IMR-90 (cell line): ENCODE measurements at regions of chr14 and their contacts with region 1.

Region 1: GRCh38 chr14:48504921-48505320 is 829.5 kb upstream of the MDGA2 start:
- DNase-seq: no peak
- ATAC-seq: no peak
- H3K4me3 ChIP-seq: no peak overlapping the region
- H3K27ac ChIP-seq: no peak overlapping the region
- H3K4me1 ChIP-seq: no peaks in the 10 kb centered on the region
- H3K27me3 ChIP-seq: no peaks in the 10 kb centered on the region
- CTCF ChIP-seq: no peak
- POLR2A ChIP-seq: no peak
- RAD21 ChIP-seq: no peak

Region 2: DNA sequence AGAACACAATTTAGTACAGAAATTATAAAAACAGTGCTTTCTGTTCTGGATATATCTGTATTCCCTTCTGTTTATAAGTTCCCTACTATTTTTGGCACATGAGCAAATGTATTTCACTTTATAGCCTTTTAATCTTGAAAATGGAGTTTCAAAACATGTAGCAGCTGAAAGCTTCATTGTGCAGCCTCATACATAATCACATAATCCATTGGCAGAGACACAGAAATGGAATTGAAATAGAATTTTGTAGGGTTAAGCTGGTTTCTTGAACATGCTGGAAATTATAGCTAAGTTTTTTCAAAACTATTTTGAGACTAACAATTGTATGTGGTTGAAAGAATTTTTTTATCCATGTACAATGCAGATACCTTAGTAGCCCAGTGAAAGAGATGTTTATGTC is 215.2 kb before region 1 on chr14:
- CTCF ChIA-PET with region 1: no interaction called
- POLR2A ChIA-PET with region 1: no interaction called
- dilution Hi-C with region 1: no loop called
- in situ Hi-C with region 1: no loop called
- intact Hi-C with region 1: no loop called
- DNase-seq: no peak
- ATAC-seq: no peak
- H3K4me3 ChIP-seq: no peak overlapping the region
- H3K27ac ChIP-seq: no peak overlapping the region
- H3K4me1 ChIP-seq: no peaks in the 10 kb centered on the region
- H3K27me3 ChIP-seq: no peaks in the 10 kb centered on the region
- CTCF ChIP-seq: no peak
- POLR2A ChIP-seq: no peak
- RAD21 ChIP-seq: no peak

Region 3: GRCh38 chr14:48456051-48456450 is 48.9 kb before region 1 on chr14:
- CTCF ChIA-PET with region 1: no interaction called
- POLR2A ChIA-PET with region 1: no interaction called
- dilution Hi-C with region 1: no loop called
- in situ Hi-C with region 1: no loop called
- intact Hi-C with region 1: loop called (anchors 2 kb)
- DNase-seq: no peak
- ATAC-seq: no peak
- H3K4me3 ChIP-seq: no peak overlapping the region
- H3K27ac ChIP-seq: no peak overlapping the region
- H3K4me1 ChIP-seq: no peaks in the 10 kb centered on the region
- H3K27me3 ChIP-seq: no peaks in the 10 kb centered on the region
- CTCF ChIP-seq: no peak
- POLR2A ChIP-seq: no peak
- RAD21 ChIP-seq: no peak